ENCODE measurements at regions of chr7 and their contacts with region 1.

Region 1: DNA sequence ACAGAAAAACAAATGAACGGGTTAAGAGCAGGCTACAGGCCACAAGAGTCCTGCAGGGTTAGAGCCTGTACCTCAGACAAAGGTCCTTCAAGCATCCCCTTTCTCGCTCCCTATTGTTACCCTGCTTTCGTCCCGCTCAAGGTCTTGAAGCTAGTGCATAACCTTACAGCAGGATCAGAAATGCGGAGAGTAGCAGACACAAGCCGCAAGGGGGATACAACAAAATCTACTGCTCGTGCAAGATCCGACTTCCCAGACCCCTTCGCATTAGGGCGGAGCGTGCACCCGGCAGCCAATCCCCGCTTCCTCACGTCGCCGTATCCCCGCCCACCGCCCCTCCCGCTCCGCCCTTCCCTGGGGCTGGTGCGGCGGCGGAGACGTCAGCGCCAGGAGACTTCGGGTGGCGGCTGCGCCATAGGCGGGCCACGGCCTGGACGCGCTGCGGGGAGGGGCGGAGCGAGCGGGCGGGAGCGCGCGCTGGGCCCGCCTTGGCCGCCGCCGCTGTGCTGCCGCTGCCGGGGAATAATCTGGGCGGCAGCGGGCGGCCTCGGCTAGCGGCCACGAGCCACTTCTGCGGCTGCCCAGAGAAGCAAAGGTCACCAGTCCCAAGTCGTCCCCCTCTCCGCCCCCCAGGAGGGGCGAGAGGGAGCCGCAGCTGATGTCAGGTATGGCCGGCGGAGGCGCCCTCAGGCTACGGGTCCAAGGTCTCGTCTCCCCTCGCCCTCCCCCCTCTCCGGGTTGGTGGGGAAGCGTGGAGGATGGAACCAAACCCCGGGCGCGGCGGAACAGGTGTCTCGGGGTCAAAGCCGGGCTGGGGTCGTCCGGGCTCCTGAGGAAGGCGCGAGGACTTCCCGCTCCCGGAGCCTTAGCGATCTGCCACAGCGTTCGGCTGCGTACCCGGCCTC is at the start of gene C1GALT1:
- DNase-seq: peak; percentile 99
- ATAC-seq: peak; percentile 89
- H3K4me3 Mint-ChIP-seq: peak within 1 kb of the TSS; percentile 81
- H3K27ac Mint-ChIP-seq: peak within 1 kb of the TSS; percentile 99
- H3K4me1 Mint-ChIP-seq: peaks cover 4% of the 10 kb centered on the region
- H3K27me3 Mint-ChIP-seq: no peaks in the 10 kb centered on the region
- total RNA-seq, gene C1GALT1: 35.3 to 37.1 TPM

Region 2: DNA sequence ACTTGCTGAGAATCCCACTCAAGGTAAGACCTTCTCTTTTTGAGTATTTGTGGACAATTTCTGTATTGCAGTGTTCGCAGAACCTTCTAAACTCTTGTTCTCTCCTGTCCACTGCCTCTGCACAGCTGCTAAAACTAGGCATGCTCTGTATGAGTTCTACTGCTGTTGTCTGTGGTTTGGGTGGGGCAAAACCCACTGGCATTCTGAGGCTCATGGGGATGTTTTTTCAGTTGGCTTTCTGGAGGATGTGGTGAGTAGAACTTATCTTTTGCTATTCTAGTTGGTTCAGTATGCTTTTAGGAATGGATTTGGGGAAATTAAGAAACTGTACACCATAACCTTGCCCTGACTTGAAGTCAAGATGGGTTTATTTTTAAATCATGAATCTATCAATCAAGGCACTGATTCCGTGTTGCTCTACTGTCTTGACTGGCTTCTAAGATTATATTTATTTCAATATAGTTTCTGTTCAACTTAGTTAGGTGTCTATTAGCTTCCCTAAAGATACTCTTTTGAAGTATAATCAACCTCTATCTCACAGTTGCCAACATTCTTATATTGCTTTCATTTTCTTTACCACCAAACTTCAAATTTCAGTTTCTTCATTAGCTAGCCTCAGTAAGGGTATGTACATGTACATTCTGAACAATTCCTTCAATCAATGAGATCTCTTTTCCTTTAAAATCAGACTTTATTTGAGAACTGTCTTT is 25.1 kb before region 1 on chr7:
- CTCF ChIA-PET with region 1: no interaction called
- POLR2A ChIA-PET with region 1: no interaction called
- intact Hi-C with region 1: loop called (anchors 2 kb)
- DNase-seq: peak; percentile 65
- ATAC-seq: peak; percentile 86
- H3K4me3 Mint-ChIP-seq: peak overlapping the region; percentile 57
- H3K27ac Mint-ChIP-seq: peak overlapping the region; percentile 74
- H3K4me1 Mint-ChIP-seq: peaks cover 49% of the 10 kb centered on the region
- H3K27me3 Mint-ChIP-seq: no peaks in the 10 kb centered on the region

Region 3: GRCh38 chr7:7257899-7258692 is 75.7 kb after region 1 on chr7:
- CTCF ChIA-PET with region 1: no interaction called
- POLR2A ChIA-PET with region 1: no interaction called
- intact Hi-C with region 1: loop called (anchors 1 kb)
- DNase-seq: no peak
- ATAC-seq: peak; percentile 67
- H3K4me3 Mint-ChIP-seq: peak overlapping the region; percentile 33
- H3K27ac Mint-ChIP-seq: peak overlapping the region; percentile 72
- H3K4me1 Mint-ChIP-seq: peaks cover 33% of the 10 kb centered on the region
- H3K27me3 Mint-ChIP-seq: no peaks in the 10 kb centered on the region

Region 4: DNA sequence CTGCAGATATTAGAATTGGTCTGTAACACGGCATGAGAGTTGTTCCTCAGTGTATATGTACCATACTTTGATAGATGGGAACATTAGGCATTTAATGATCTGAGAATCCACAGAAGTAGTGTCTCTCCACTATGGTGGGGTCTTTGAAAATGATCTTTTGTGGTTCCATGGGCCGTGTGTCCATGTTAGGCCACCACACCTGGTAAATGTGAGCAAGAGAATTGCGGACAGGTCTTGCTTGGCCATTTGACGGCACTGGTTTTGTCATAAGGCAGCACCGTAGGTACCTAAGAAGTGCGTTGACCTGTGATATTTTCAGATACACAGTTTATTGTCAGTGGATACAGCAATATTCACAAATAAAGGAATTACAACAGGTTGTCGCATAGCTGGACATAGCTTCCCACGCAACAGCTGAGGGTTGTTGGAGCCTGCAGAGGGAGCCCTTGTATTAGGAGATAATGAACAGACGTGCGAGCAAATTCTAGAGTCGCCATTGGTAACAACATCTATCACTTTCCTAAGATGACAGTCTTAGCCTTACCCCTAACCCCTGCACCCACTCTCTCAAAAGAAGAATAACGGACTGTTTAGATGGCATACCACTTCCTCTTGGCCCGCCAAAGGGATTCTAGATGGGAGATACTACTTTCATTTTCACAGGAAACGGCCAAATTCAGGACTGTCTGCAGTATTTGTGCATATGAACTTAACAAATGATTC is 241.9 kb after region 1 on chr7:
- CTCF ChIA-PET with region 1: no interaction called
- POLR2A ChIA-PET with region 1: no interaction called
- intact Hi-C with region 1: loop called in 1 of 2 experiments (anchors 5 kb)
- DNase-seq: peak; percentile 65
- ATAC-seq: peak; percentile 92
- H3K4me3 Mint-ChIP-seq: peak overlapping the region; percentile 55
- H3K27ac Mint-ChIP-seq: no peak overlapping the region
- H3K4me1 Mint-ChIP-seq: peaks cover 6% of the 10 kb centered on the region
- H3K27me3 Mint-ChIP-seq: no peaks in the 10 kb centered on the region

Region 5: DNA sequence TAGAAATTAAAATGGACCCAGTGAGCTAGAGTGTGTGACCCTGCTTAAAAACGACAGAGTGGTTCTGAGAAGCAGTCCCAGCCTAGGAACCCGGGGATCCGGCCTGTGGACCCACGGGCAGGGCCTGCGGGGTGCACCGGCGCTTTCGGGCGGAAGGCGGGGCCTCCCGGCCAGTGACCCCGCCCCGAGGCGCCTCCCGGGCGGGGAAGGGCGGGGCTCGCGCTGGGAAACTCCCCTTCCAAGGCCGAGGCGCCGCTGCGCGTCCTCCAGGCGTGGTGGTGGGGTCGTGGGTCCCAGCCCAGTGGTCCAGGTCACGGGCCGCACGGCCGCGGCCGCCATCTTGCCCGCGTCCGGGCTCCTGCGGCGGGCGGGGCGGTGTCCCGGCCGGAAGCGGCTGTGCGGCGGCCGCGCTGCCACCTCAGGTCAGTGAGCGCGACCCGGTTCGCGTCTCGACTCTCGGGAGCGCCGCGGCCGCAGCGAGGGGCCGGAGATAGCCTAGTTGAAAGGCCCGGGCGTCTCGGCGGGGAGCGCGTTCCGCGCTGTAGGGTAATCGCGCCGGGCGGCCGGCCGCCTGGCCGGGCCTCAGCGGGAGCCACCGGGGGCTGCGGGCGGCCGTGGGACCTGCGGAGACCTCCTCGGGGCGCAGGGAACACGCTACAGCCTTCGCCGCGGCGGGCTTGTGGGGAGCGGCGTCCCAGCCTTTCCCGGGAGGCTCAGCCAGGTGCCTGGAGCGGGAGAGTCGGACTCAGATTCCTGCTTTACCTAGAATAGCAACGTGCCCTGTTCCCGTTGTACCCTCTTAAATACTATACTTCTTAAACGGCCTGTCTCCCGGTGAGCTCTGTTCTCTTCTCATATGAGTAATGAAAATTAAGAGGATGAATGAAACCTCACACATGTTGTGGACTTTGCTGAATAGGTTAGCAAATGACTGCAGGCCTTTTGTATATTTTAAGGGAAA is 384.5 kb after region 1 on chr7 and contains the start of gene MIOS:
- CTCF ChIA-PET with region 1: no interaction called
- POLR2A ChIA-PET with region 1: no interaction called
- intact Hi-C with region 1: loop called (anchors 1 to 2 kb)
- DNase-seq: peak; percentile 89
- ATAC-seq: peak; percentile 90
- H3K4me3 Mint-ChIP-seq: peak within 1 kb of the TSS; percentile 83
- H3K27ac Mint-ChIP-seq: peak within 1 kb of the TSS; percentile 90
- H3K4me1 Mint-ChIP-seq: peaks cover 29% of the 10 kb centered on the region
- H3K27me3 Mint-ChIP-seq: no peaks in the 10 kb centered on the region
- total RNA-seq, gene MIOS: 41.7 to 45.7 TPM

Region 6: GRCh38 chr7:7719236-7719635 is 536.8 kb after region 1 on chr7:
- CTCF ChIA-PET with region 1: no interaction called
- POLR2A ChIA-PET with region 1: no interaction called
- intact Hi-C with region 1: loop called in 1 of 2 experiments (anchors 10 kb)
- DNase-seq: peak; percentile 66
- ATAC-seq: peak; percentile 99
- H3K4me3 Mint-ChIP-seq: peak overlapping the region; percentile 8
- H3K27ac Mint-ChIP-seq: peak overlapping the region; percentile 84
- H3K4me1 Mint-ChIP-seq: peaks cover 28% of the 10 kb centered on the region
- H3K27me3 Mint-ChIP-seq: no peaks in the 10 kb centered on the region

Region 7: GRCh38 chr7:8176370-8177081 is 994.1 kb after region 1 on chr7:
- CTCF ChIA-PET with region 1: no interaction called
- POLR2A ChIA-PET with region 1: no interaction called
- intact Hi-C with region 1: loop called in 1 of 2 experiments (anchors 1 kb)
- DNase-seq: peak; percentile 74
- ATAC-seq: peak; percentile 85
- H3K4me3 Mint-ChIP-seq: peak overlapping the region; percentile 63
- H3K27ac Mint-ChIP-seq: peak overlapping the region; percentile 95
- H3K4me1 Mint-ChIP-seq: peaks cover 42% of the 10 kb centered on the region
- H3K27me3 Mint-ChIP-seq: no peaks in the 10 kb centered on the region

Measured in activated CD4-positive, alpha-beta T cell treated with anti-CD3 and anti-CD28 coated beads for 36 hours (primary cell).